Activated CD4-positive, alpha-beta memory T cell treated with anti-CD3 and anti-CD28 coated beads, Interleukin-2, amount 10 ng/mL, durations not matched to agents 7 days and 5 days (primary cell): ENCODE measurements at regions of chr6 and their contacts with region 1.

Region 1: DNA sequence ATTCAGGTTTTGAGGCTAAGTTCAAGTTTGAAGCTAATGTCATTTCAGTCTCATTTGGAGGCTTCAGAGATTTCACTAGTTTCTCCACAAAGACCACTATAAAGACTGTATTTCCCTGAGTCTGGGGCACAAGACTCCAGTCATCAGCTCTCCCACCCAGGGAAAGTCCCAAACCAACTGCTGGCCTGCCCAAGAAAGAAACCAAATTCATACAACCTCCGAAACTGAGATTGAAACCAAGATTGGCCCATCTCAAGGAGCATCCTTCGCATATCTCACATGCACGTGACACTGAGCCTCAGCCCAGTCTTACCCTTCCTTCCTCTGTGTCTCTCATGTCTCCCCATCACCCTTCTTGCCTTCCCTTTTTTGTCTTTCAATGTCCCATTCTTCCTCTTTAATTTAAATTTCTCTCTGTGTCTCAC is 3.5 kb upstream of the LTA start:
- DNase-seq: peak; percentile 79
- H3K4me3 Mint-ChIP-seq: peak overlapping the region; percentile 23
- H3K27ac Mint-ChIP-seq: peak overlapping the region; percentile 66
- H3K4me1 Mint-ChIP-seq: peaks cover 69% of the 10 kb centered on the region
- H3K27me3 Mint-ChIP-seq: peaks cover 41% of the 10 kb centered on the region

Region 2: GRCh38 chr6:31128093-31128676 is 440.4 kb before region 1 on chr6:
- CTCF ChIA-PET with region 1: no interaction called
- POLR2A ChIA-PET with region 1: no interaction called
- DNase-seq: peak; percentile 78
- H3K4me3 Mint-ChIP-seq: no peak overlapping the region
- H3K27ac Mint-ChIP-seq: no peak overlapping the region
- H3K4me1 Mint-ChIP-seq: no peaks in the 10 kb centered on the region
- H3K27me3 Mint-ChIP-seq: peaks cover 22% of the 10 kb centered on the region

Region 3: GRCh38 chr6:31580807-31581433 is 12.4 kb after region 1 on chr6:
- CTCF ChIA-PET with region 1: interaction called, 70 read pairs
- POLR2A ChIA-PET with region 1: interaction called, 1,578 read pairs
- DNase-seq: peak; percentile 89
- H3K4me3 Mint-ChIP-seq: peak overlapping the region; percentile 91
- H3K27ac Mint-ChIP-seq: peak overlapping the region; percentile 94
- H3K4me1 Mint-ChIP-seq: peaks cover 58% of the 10 kb centered on the region
- H3K27me3 Mint-ChIP-seq: no peaks in the 10 kb centered on the region

Region 4: DNA sequence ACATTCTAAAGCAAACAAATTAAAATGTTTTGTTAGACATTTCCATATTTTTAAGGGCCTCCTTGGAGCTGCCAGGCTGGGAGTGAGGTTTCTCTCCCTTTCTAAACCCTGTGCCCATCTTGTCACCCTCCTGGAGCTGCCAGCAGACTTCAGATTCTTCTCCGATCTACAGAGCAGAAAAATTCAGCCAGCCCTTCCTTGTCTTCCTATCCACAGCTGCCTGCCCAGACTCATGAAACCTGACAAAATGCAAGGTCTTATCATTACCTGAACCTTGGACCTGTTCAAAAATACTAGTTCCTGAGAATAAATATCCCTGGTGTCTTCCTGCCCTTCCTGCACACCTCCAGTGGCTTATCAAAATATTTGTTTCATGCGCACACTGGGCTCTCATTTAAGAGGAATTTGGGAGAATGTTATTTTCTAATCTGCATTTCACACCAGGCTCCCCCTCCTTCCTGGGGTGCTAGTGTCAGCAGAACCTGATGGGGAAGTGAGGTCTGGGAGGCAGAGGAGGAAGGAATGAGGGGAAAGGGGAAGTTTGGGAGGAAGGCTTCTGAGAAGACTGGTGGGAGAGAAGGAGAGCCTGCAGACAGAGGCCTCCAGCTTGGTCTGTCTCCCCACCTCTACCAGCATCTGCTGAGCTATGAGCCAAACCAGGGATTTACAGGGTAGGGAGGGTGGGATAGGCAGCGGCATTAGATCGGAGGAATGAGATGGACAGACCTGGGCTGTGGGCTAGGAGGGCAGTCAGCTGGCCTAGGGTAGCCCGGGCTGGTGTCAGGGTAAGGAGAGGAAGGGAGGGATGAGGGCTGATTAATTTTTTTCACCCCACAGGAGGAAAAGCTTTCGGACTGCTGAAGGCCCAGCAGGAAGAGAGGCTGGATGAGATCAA is 46.4 kb after region 1 on chr6 and contains the start of gene AIF1:
- CTCF ChIA-PET with region 1: no interaction called
- POLR2A ChIA-PET with region 1: no interaction called
- DNase-seq: no peak
- H3K4me3 Mint-ChIP-seq: peak within 1 kb of the TSS; percentile 16
- H3K27ac Mint-ChIP-seq: peak within 1 kb of the TSS; percentile 12
- H3K4me1 Mint-ChIP-seq: peaks cover 32% of the 10 kb centered on the region
- H3K27me3 Mint-ChIP-seq: peaks cover 2% of the 10 kb centered on the region
- total RNA-seq, gene AIF1: 11.3 to 11.7 TPM